ENCODE measurements at regions of chr1 and their contacts with region 1.

Region 1: DNA sequence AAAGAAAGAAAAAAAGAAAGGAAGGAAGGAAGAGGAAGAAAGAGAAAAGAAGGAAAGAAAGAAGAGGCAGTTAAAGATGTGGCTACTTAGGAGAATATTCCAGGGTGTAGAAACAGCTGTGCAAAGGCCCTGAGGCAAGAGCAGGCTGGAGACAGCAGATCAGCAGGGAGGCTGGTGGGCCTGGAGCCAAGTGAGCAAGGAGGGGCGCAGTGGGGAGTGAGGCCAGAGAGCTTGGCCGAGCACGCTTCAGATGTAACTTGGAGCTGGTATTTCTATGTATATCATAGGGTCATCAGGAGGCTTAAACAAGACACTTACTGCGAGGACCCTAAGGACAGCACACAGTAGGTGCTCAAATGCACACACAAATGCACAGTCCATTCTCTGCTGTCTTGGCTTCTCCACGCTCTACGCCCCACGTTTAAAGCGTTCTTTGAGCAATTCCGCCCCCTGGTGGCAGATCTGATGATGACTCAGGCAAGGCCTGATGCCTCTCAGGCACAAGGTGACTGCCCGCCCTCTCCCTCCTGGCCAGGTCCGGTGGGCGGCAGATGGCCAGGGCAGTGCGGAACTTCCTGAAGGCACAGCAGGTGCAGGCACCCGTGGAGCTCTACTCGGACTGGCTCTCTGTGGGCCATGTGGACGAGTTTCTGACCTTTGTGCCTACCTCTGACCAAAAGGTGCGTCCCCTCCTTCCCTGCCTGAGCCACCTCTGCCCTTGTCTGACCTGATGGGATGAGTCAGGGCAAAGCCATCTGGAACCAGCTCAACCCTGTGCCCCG is 11.9 kb upstream of the PADI3 start:
- DNase-seq: peak; percentile 81 to 84
- ATAC-seq: peak; percentile 75 to 91 (median 85)
- H3K4me3 ChIP-seq: no peak overlapping the region
- H3K27ac ChIP-seq: no peak overlapping the region
- H3K4me1 ChIP-seq: peaks cover 0 to 6% (median 0%) of the 10 kb centered on the region in 9 donors
- H3K27me3 ChIP-seq: peaks cover 0 to 47% (median 21%) of the 10 kb centered on the region in 7 donors
- CTCF ChIP-seq: peak; percentile 76 to 92 (median 86)

Region 2: GRCh38 chr1:16954579-16954978 is 282.4 kb before region 1 on chr1:
- intact Hi-C with region 1: loop called in 7 of 10 experiments (anchors 5 to 10 kb)
- DNase-seq: no peak
- ATAC-seq: no peak
- H3K4me3 ChIP-seq: no peak overlapping the region
- H3K27ac ChIP-seq: no peak overlapping the region
- H3K4me1 ChIP-seq: peaks cover 0 to 6% (median 0%) of the 10 kb centered on the region in 9 donors
- H3K27me3 ChIP-seq: no peaks in the 10 kb centered on the region
- CTCF ChIP-seq: no peak

Region 3: DNA sequence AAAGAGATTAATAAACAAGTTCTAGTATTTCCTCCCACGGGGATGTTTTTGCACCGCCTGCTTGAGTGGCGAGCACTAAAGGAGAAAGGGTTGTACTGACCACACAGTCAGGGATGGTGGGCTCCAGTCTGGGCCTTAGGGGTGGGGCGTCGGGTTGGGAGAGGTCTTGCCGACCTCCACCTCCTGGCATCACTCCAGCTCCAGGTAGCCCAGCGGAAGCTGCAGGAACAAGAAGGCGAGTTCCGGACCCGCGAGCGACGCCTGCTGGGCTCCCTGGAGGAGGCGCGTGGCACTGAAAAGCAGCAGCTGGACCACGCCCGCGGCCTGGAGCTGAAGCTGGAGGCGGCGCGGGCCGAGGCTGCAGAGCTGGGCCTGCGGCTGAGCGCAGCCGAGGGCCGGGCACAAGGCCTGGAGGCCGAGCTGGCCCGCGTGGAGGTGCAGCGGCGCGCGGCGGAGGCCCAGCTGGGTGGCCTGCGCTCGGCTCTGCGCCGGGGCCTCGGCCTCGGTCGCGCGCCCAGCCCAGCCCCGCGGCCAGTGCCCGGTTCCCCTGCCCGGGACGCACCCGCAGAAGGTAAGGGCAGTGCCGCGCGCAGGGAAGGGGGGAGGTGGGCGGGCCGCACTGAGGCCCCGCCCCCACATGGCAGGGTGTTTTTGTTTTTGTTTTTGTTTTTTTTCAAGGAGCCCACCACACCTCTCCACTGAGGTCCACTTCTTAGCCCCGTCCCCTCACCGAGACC is 276.2 kb before region 1 on chr1:
- intact Hi-C with region 1: loop called in 5 of 10 experiments (anchors 10 kb)
- DNase-seq: peak; percentile 72 to 81
- ATAC-seq: peak; percentile 70 to 92 (median 78)
- H3K4me3 ChIP-seq: peak overlapping the region in 8 of 10 donors; percentile 21 to 48 (median 42)
- H3K27ac ChIP-seq: peak overlapping the region in 3 of 10 donors; percentile 25 to 43 (median 34)
- H3K4me1 ChIP-seq: peaks cover 0 to 22% (median 0%) of the 10 kb centered on the region in 9 donors
- H3K27me3 ChIP-seq: no peaks in the 10 kb centered on the region
- CTCF ChIP-seq: peak; percentile 10 to 71 (median 59)

Region 4: GRCh38 chr1:17059739-17060460 is 177.1 kb before region 1 on chr1:
- intact Hi-C with region 1: loop called in 9 of 10 experiments (anchors 1 to 5 kb)
- DNase-seq: peak; percentile 43 to 53
- ATAC-seq: peak; percentile 59 to 88 (median 84)
- H3K4me3 ChIP-seq: no peak overlapping the region
- H3K27ac ChIP-seq: peak overlapping the region in 1 of 10 donors; percentile 72
- H3K4me1 ChIP-seq: peaks cover 0 to 48% (median 7%) of the 10 kb centered on the region in 9 donors
- H3K27me3 ChIP-seq: peaks cover 0 to 5% (median 0%) of the 10 kb centered on the region in 7 donors
- CTCF ChIP-seq: peak; percentile 41 to 73 (median 67)

Region 5: GRCh38 chr1:17066361-17067068 is 170.5 kb before region 1 on chr1:
- intact Hi-C with region 1: loop called in 3 of 10 experiments (anchors 1 to 5 kb)
- DNase-seq: no peak
- ATAC-seq: no peak
- H3K4me3 ChIP-seq: no peak overlapping the region
- H3K27ac ChIP-seq: peak overlapping the region in 1 of 10 donors; percentile 78
- H3K4me1 ChIP-seq: peaks cover 0 to 50% (median 7%) of the 10 kb centered on the region in 9 donors
- H3K27me3 ChIP-seq: no peaks in the 10 kb centered on the region
- CTCF ChIP-seq: no peak

Region 6: DNA sequence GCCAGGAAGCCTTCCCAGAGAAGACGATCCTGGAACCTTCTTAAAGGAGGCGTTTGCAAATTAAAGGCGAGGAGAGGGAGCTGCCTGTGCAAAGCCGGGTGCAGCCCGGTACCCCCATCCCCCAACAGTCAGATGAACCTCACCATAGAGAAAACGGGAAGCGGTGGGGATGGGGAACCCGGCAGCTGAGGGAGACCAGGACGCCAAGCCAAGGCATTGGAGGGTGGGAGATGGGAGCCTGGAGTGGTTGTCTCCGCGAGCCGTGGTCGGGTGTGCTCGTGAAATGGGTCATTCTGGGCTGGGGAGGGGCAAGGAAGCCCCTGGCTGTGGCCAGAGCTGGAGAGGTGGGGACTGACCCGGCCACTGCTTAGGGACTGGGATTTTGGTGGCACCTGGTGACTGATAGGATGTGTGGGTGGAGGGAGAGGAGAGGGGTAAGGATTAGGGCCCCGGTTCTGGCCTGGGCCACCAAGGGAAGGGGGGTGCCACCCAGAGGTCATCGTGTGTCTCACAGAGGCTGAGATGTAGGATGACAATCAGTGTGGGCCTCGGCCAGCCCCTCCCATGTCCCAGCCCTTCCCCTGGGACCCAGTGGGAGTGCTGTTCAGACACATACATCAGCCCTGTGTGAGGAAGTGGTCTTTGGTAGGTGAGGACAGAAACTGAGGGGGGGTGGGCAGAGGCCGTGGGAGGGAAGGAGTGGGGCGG is 117.0 kb before region 1 on chr1:
- intact Hi-C with region 1: loop called in 8 of 10 experiments (anchors 1 to 5 kb)
- DNase-seq: no peak
- ATAC-seq: no peak
- H3K4me3 ChIP-seq: peak overlapping the region in 8 of 10 donors; percentile 5 to 55 (median 44)
- H3K27ac ChIP-seq: peak overlapping the region in 1 of 10 donors; percentile 61
- H3K4me1 ChIP-seq: peaks cover 0 to 39% (median 17%) of the 10 kb centered on the region in 9 donors
- H3K27me3 ChIP-seq: peaks cover 6 to 58% (median 48%) of the 10 kb centered on the region in 7 donors
- CTCF ChIP-seq: no peak

Region 7: DNA sequence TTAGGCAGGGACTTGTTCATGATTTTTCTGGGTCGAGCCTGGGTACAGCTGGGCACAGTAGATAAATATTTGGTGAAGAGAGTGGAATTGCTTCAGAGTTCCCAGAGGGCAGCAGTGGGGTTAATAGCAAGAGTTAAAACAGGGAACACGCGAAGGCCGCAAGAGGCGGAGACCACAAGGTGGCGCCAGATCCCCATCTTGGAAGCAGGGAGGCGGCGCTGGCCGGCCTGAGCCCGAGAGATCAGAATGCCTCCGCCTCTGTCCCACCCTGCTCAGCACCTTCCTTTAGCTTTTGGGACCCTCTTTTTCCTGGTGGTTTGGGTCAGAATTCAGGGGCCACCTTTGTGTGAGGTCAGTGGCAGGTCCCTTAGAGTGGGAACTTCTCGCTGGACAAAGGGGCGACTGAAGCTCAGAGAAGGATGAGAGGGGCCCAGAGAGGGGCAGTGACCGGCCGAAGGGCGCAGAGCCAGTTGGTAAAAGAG is 111.2 kb before region 1 on chr1:
- intact Hi-C with region 1: loop called (anchors 1 to 5 kb)
- DNase-seq: peak; percentile 84 to 89
- ATAC-seq: peak; percentile 77 to 88 (median 83)
- H3K4me3 ChIP-seq: no peak overlapping the region
- H3K27ac ChIP-seq: no peak overlapping the region
- H3K4me1 ChIP-seq: peaks cover 0 to 43% (median 5%) of the 10 kb centered on the region in 9 donors
- H3K27me3 ChIP-seq: peaks cover 0 to 16% (median 2%) of the 10 kb centered on the region in 7 donors
- CTCF ChIP-seq: peak; percentile 85 to 98 (median 92)

Measured in heart right ventricle (tissue), 16 donors.